Gastrocnemius medialis (tissue), 4 donors: ENCODE measurements at regions of chr9 and their contacts with region 1.

Region 1: GRCh38 chr9:96449845-96450612 is at the start of gene HABP4:
- DNase-seq: peak; percentile 94
- ATAC-seq: peak; percentile 95 to 96
- H3K4me3 ChIP-seq: peak within 1 kb of the TSS; percentile 71 to 85 (median 76)
- H3K27ac ChIP-seq: peak within 1 kb of the TSS; percentile 78 to 88 (median 87)
- H3K4me1 ChIP-seq: peaks cover 7 to 10% of the 10 kb centered on the region in 2 donors
- H3K27me3 ChIP-seq: no peaks in the 10 kb centered on the region
- CTCF ChIP-seq: peak in 2 of 5 experiments; percentile 5 to 20
- POLR2A ChIP-seq: peak; percentile 94 to 95
- total RNA-seq, gene HABP4: 6.2 to 19.3 (median 12.3) TPM

Region 2: GRCh38 chr9:96491079-96491879 is 41.2 kb after region 1 on chr9:
- in situ Hi-C with region 1: no loop called
- intact Hi-C with region 1: no loop called
- DNase-seq: no peak
- ATAC-seq: peak in 1 of 2 donors; percentile 29
- H3K4me3 ChIP-seq: no peak overlapping the region
- H3K27ac ChIP-seq: no peak overlapping the region
- H3K4me1 ChIP-seq: peaks cover 14 to 15% of the 10 kb centered on the region in 2 donors
- H3K27me3 ChIP-seq: no peaks in the 10 kb centered on the region
- CTCF ChIP-seq: no peak
- POLR2A ChIP-seq: no peak

Region 3: DNA sequence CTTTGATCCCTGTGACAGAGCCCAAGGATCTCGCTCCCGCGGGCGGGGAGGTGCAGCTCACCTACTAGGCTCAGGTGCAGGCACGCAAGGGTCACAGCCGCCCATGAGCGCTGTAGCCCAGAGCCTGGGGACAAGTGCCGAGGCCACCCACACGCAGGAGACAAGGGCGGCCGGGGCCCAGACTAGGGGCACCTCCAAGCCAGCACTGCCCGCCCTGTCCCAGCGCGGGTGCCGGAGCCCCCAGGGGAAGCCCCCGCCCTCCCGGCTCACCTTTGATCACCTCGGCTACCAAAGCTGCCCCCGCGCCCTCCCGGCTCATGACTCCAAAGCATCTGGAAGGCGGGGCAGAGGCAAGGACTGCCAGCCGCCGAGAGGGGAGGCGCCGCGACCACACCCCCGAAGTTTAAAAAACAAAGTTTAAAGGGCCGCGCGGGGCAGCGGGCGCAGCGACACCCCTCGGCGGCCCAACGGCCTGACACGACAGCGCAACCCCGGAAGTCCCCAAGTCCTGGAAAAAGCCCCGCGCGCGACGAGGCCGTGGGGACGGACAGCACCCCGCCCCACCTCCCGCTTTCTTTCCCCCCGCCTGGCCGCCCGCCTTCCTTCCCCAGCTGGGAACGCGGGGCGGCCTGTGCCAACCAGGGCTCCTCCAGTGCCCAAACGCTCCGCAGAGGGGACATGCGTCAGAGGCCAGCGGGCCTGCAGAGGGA is 116.6 kb after region 1 on chr9:
- in situ Hi-C with region 1: loop called in 1 of 4 experiments (anchors 10 kb)
- intact Hi-C with region 1: loop called (anchors 5 kb)
- DNase-seq: peak; percentile 45 to 60
- ATAC-seq: peak; percentile 82 to 91
- H3K4me3 ChIP-seq: peak overlapping the region; percentile 65 to 81 (median 77)
- H3K27ac ChIP-seq: peak overlapping the region; percentile 69 to 84 (median 75)
- H3K4me1 ChIP-seq: peaks cover 0 to 11% of the 10 kb centered on the region in 2 donors
- H3K27me3 ChIP-seq: no peaks in the 10 kb centered on the region
- CTCF ChIP-seq: peak; percentile 31 to 77 (median 62)
- POLR2A ChIP-seq: peak in 1 of 2 donors; percentile 12

Region 4: GRCh38 chr9:96626912-96627311 is 176.9 kb after region 1 on chr9:
- in situ Hi-C with region 1: no loop called
- intact Hi-C with region 1: no loop called
- DNase-seq: no peak
- ATAC-seq: no peak
- H3K4me3 ChIP-seq: no peak overlapping the region
- H3K27ac ChIP-seq: no peak overlapping the region
- H3K4me1 ChIP-seq: no peaks in the 10 kb centered on the region
- H3K27me3 ChIP-seq: peaks cover 0 to 8% (median 0%) of the 10 kb centered on the region in 3 donors
- CTCF ChIP-seq: no peak
- POLR2A ChIP-seq: no peak

Region 5: DNA sequence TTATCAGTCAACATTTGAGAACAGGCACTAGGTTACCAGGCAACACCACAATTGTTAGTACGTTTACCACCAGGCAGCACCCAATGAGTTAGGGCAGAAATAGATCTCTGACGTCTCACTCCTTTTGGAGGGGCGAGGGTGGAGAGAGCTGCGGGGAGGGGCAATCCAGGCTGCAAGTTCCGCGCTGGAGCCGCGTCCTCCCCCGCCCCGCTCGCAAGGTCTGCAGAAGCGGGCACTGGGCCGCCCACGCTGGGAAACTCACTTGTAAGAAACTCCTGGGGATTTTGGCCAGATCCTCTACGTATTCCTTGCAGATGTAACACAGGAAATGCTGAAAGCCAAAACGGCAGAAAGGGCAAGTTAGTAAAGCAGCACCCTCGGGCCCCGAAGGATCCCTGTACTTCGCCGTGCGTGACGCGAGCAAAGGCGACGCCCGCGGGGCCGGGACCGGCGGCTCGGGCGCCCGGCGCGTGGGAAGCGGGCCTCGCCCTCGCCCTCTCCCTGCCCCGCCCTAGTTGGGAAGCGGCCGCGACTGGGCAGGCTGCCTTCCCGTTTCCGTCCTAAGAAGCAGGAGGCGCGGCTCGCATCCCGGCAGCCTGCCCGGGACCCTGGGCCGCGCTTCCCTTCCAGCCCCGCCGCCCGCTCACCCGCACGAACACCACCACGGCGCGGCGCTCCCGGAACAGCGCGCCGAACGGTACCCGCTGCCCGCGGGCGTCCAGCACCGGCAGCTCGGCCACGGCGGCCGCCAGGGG is 204.6 kb after region 1 on chr9:
- in situ Hi-C with region 1: no loop called
- intact Hi-C with region 1: loop called (anchors 2 kb)
- DNase-seq: peak; percentile 61 to 84
- ATAC-seq: peak; percentile 79 to 83
- H3K4me3 ChIP-seq: peak overlapping the region; percentile 65 to 74 (median 70)
- H3K27ac ChIP-seq: peak overlapping the region; percentile 93 to 96 (median 95)
- H3K4me1 ChIP-seq: peaks cover 15 to 25% of the 10 kb centered on the region in 2 donors
- H3K27me3 ChIP-seq: no peaks in the 10 kb centered on the region
- CTCF ChIP-seq: peak in 4 of 5 experiments; percentile 33 to 42 (median 36)
- POLR2A ChIP-seq: peak; percentile 68 to 74

Region 6: GRCh38 chr9:96667361-96667728 is 217.3 kb after region 1 on chr9:
- in situ Hi-C with region 1: loop called in 3 of 4 experiments (anchors 5 to 10 kb)
- intact Hi-C with region 1: no loop called
- DNase-seq: no peak
- ATAC-seq: no peak
- H3K4me3 ChIP-seq: no peak overlapping the region
- H3K27ac ChIP-seq: no peak overlapping the region
- H3K4me1 ChIP-seq: no peaks in the 10 kb centered on the region
- H3K27me3 ChIP-seq: no peaks in the 10 kb centered on the region
- CTCF ChIP-seq: no peak
- POLR2A ChIP-seq: no peak